Tibial artery (tissue), 4 donors: ENCODE measurements at regions of chr20 and their contacts with region 1.

Region 1: DNA sequence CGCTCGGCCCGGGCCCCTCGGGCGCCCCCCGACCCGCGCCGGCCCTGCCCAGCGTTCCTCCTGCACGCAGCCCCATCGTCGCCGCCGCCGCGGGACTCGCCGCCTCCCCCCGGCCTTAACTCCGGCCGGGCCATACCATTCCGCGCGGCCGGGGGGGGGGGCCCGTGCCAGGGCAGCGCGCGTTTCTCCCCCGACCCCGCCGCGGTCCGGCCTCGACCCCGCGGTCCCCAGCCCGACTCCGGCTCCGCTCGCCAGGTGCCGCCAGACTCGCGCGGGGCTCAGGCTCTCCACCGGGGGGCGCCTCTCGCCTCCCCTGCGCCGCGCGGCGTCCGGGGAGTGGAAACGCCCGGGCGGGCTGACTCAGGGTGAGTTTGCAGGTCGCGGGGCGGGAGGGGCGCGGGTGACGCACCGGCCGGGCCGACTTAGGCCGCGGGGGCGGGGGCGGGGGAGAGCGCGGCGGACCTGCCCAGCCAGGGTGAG is at the start of gene SRXN1:
- DNase-seq: peak; percentile 88 to 94
- H3K4me3 ChIP-seq: peak within 1 kb of the TSS; percentile 71 to 86
- H3K27ac ChIP-seq: peak within 1 kb of the TSS; percentile 79 to 83
- H3K4me1 ChIP-seq: peaks cover 0 to 26% (median 17%) of the 10 kb centered on the region in 4 donors
- H3K27me3 ChIP-seq: no peaks in the 10 kb centered on the region
- CTCF ChIP-seq: peak; percentile 51 to 58

Region 2: GRCh38 chr20:543369-544152 is 109.6 kb before region 1 on chr20 and contains the start of gene CSNK2A1:
- intact Hi-C with region 1: loop called (anchors 2 kb)
- DNase-seq: peak; percentile 92 to 97
- H3K4me3 ChIP-seq: peak within 1 kb of the TSS; percentile 92 to 96
- H3K27ac ChIP-seq: peak within 1 kb of the TSS; percentile 90 to 94
- H3K4me1 ChIP-seq: peaks cover 0 to 50% (median 40%) of the 10 kb centered on the region in 4 donors
- H3K27me3 ChIP-seq: no peaks in the 10 kb centered on the region
- CTCF ChIP-seq: peak in 1 of 2 experiments; percentile 17

Region 3: DNA sequence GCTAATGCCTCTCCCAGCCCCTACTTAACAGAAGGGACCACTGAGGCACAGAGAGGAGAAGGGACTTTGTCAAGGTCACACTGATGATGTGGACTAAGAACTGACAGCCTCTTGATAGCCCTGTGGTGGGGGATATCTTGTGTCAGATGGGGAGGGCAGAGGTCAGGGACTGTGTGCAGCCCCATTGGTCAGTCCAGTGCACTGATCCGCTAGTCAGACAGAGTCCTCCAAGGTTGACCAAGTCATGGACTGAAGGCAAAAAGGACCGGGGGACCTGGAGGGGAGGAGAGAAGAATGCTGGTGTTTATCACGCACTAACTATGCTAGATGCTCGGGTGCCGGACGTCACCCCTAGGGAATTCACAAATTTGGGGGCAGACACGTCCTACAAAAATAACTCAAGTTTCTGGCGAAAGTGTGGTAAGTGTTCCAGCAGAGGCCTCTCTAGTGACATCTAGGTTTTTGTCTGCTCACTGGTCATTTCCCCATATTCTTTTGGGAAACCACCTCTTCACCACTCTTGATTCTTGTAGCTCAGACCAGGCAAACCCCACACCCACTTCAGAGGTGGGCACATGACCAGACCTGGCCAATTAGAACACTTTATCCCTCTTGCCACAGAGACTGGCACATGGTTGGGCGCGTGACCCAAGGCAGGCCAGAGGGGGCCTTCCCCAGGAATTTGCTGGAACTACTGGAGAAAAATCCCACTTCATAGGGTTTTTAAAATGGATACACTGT is 64.0 kb before region 1 on chr20:
- intact Hi-C with region 1: no loop called
- DNase-seq: no peak
- H3K4me3 ChIP-seq: no peak overlapping the region
- H3K27ac ChIP-seq: no peak overlapping the region
- H3K4me1 ChIP-seq: peaks cover 0 to 14% (median 0%) of the 10 kb centered on the region in 4 donors
- H3K27me3 ChIP-seq: peaks cover 0 to 9% of the 10 kb centered on the region in 2 donors
- CTCF ChIP-seq: no peak

Region 4: GRCh38 chr20:833450-834150 is 180.4 kb after region 1 on chr20 and contains the start of gene FAM110A:
- intact Hi-C with region 1: loop called (anchors 10 kb)
- DNase-seq: peak; percentile 96 to 97
- H3K4me3 ChIP-seq: peak within 1 kb of the TSS; percentile 69 to 80
- H3K27ac ChIP-seq: peak within 1 kb of the TSS; percentile 67 to 73
- H3K4me1 ChIP-seq: peaks cover 0 to 22% (median 14%) of the 10 kb centered on the region in 4 donors
- H3K27me3 ChIP-seq: no peaks in the 10 kb centered on the region
- CTCF ChIP-seq: no peak